Activated T-helper 1 cell treated with anti-CD3 and anti-CD28 coated beads, Interleukin-12 subunit alpha, Interleukin-12 subunit beta, Interleukin-2, Interleukin-4 antibody, amounts not matched to agents 30 ng/mL and 10 ng/mL and 1 ng/mL, durations not matched to agents 14 hours and 24 hours and 36 hours (primary cell): ENCODE measurements at regions of chr2 and their contacts with region 1.

Region 1: GRCh38 chr2:144471305-144472045 is 48.4 kb downstream of the ZEB2 start:
- DNase-seq: no peak
- H3K4me3 Mint-ChIP-seq: no peak overlapping the region
- H3K27ac Mint-ChIP-seq: peak overlapping the region; percentile 15
- H3K4me1 Mint-ChIP-seq: peaks cover 20% of the 10 kb centered on the region
- H3K27me3 Mint-ChIP-seq: no peaks in the 10 kb centered on the region

Region 2: GRCh38 chr2:144456680-144457079 is 14.8 kb before region 1 on chr2:
- intact Hi-C with region 1: loop called (anchors 2 kb)
- DNase-seq: no peak
- H3K4me3 Mint-ChIP-seq: no peak overlapping the region
- H3K27ac Mint-ChIP-seq: no peak overlapping the region
- H3K4me1 Mint-ChIP-seq: peaks cover 78% of the 10 kb centered on the region
- H3K27me3 Mint-ChIP-seq: peaks cover 13% of the 10 kb centered on the region